ENCODE measurements at regions of chr3 and their contacts with region 1.

Region 1: GRCh38 chr3:196528639-196529233 is 13.6 kb upstream of the SMCO1 start:
- DNase-seq: peak; percentile 87
- H3K4me3 Mint-ChIP-seq: peak overlapping the region; percentile 74
- H3K27ac Mint-ChIP-seq: peak overlapping the region; percentile 36
- H3K4me1 Mint-ChIP-seq: peaks cover 6% of the 10 kb centered on the region
- H3K27me3 Mint-ChIP-seq: peaks cover 2% of the 10 kb centered on the region

Region 2: DNA sequence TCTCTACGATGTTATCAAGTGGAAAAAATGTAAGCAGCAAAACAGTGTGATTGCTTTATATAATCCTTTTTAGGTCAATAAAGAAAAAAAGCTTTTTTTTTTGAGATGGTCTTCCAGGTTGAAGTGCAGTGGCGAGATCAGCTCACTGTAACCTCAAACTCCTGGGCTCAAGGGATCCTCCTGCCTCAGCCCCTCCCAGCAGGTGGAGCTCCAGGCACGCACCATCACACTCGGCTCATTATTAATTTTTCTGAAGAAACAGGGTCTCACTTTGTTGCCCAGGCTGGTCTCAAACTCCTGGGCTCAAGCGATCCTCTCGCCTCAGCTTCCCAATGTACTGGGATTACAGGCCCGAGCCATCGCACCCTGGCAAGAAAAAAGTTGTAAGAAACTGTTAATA is 42.5 kb before region 1 on chr3:
- CTCF ChIA-PET with region 1: interaction called, 28 read pairs
- intact Hi-C with region 1: no loop called
- DNase-seq: peak; percentile 44
- H3K4me3 Mint-ChIP-seq: no peak overlapping the region
- H3K27ac Mint-ChIP-seq: no peak overlapping the region
- H3K4me1 Mint-ChIP-seq: no peaks in the 10 kb centered on the region
- H3K27me3 Mint-ChIP-seq: no peaks in the 10 kb centered on the region

Region 3: DNA sequence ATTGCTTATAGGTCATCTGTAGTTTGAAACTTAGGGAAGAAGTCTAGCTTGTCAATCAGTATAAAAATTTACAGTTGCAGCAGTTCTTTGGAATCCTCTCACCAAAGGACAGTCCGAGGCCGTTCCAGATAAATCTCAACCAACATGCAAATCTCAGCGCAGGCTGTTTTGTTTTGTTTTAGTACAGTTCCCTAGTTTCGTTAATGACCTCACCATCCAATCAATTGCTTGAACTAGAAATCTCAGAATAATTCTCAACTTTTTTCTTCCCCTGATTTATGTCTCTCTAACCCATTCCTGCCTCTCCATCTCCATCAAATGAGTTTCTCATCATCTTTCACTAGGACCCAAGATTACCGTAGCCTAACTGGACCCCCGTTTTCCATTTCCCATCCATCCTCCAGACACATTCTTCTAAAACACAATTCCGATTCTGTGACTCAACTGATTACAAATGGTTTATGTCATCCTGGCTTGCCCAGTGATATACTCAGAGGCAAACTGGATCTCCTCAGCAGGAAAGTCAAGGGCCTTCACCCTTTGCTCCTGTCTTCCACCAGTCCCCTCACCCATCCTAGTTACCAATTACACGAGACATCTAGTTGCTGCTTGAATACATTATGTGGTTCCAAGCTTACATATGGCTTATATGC is 14.9 kb before region 1 on chr3:
- CTCF ChIA-PET with region 1: interaction called, 37 read pairs
- intact Hi-C with region 1: no loop called
- DNase-seq: no peak
- H3K4me3 Mint-ChIP-seq: no peak overlapping the region
- H3K27ac Mint-ChIP-seq: no peak overlapping the region
- H3K4me1 Mint-ChIP-seq: no peaks in the 10 kb centered on the region
- H3K27me3 Mint-ChIP-seq: no peaks in the 10 kb centered on the region

Region 4: GRCh38 chr3:196632046-196632751 is 103.5 kb after region 1 on chr3:
- CTCF ChIA-PET with region 1: interaction called, 3 read pairs
- intact Hi-C with region 1: loop called (anchors 2 kb)
- DNase-seq: peak; percentile 90
- H3K4me3 Mint-ChIP-seq: peak overlapping the region; percentile 88
- H3K27ac Mint-ChIP-seq: peak overlapping the region; percentile 97
- H3K4me1 Mint-ChIP-seq: peaks cover 48% of the 10 kb centered on the region
- H3K27me3 Mint-ChIP-seq: no peaks in the 10 kb centered on the region

Region 5: DNA sequence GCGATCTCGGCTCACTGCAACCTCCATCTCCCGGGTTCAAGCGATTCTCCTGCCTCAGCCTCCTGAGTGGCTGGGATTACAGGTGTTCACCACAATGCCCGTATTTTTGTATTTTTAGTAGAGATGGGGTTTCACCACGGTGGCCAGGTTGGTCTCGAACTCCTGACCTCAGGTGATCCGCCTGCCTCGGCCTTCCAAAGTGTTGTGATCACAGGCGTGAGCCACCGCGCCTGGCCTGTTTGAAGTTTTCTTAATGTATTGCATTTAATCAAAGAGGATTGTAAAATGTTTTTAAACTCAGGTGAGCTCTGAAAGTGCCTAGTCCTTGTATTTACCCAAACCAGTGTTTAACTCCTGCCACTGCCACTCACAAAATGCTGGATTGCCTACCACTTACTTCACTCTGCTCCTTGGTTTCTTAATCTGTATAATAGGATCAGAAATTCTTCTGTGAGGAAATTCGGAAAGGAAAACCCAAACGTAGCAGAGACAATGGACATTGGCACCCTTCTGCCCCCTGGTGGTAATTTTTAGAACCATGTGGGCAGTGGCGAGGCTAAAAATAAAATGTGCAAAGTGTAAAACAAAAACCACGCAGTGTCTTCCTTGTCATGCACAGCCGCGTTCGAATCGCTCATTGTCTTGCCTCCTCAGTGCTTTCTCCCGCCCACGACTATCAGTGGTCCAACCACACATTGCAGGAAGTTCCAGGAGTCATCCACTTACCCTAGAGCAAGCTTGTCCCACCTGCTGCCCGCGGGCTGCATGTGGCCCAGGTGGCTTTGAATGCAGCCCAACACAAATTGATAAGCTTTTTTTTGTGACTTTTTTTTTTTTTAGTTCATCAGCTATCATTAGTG is 156.0 kb after region 1 on chr3:
- CTCF ChIA-PET with region 1: interaction called, 3 read pairs
- intact Hi-C with region 1: loop called (anchors 2 kb)
- DNase-seq: peak; percentile 74
- H3K4me3 Mint-ChIP-seq: peak overlapping the region; percentile 45
- H3K27ac Mint-ChIP-seq: no peak overlapping the region
- H3K4me1 Mint-ChIP-seq: peaks cover 12% of the 10 kb centered on the region
- H3K27me3 Mint-ChIP-seq: no peaks in the 10 kb centered on the region